ENCODE measurements at regions of chr16 and their contacts with region 1.

Region 1: GRCh38 chr16:52812678-52813556 is 239.8 kb downstream of the CHD9NB start:
- DNase-seq: peak; percentile 73
- ATAC-seq: peak; percentile 83
- H3K4me3 ChIP-seq: peak overlapping the region in 1 of 2 experiments; percentile 41; a peak in 2 of 4 replicates
- H3K27ac ChIP-seq: peak overlapping the region; percentile 50
- H3K4me1 ChIP-seq: peaks cover 17 to 29% of the 10 kb centered on the region in 2 experiments
- H3K27me3 ChIP-seq: no peaks in the 10 kb centered on the region
- CTCF ChIP-seq: no peak
- POLR2A ChIP-seq: no peak
- RAD21 ChIP-seq: no peak; the same call in 1 of the 2 replicates

Region 2: GRCh38 chr16:52757746-52758472 is 55.0 kb before region 1 on chr16:
- CTCF ChIA-PET with region 1: no interaction called
- POLR2A ChIA-PET with region 1: no interaction called
- RAD21 ChIA-PET with region 1: no interaction called
- intact Hi-C with region 1: loop called (anchors 10 kb)
- DNase-seq: no peak
- ATAC-seq: no peak
- H3K4me3 ChIP-seq: no peak overlapping the region
- H3K27ac ChIP-seq: no peak overlapping the region
- H3K4me1 ChIP-seq: no peaks in the 10 kb centered on the region
- H3K27me3 ChIP-seq: no peaks in the 10 kb centered on the region
- CTCF ChIP-seq: no peak
- POLR2A ChIP-seq: no peak
- RAD21 ChIP-seq: no peak

Region 3: DNA sequence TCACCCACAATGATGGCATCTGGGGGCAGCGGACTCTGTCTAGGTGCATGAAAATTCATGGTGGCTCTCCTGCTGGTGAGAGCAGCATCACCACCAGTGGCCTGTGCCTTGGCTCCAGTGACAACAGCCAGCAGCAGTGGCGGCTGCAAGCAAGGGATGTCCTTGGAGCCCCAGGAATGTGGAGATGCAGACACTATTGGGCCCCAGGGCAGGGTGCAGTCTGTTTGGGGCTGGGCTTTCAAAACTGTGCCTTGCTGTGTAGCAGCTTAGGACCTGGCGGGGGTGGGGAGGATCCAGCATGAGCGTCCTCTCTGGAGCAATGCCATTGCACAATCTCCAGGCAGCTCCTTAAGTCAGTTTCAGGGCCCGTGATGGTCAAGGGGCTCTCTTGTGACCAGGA is 40.1 kb after region 1 on chr16:
- CTCF ChIA-PET with region 1: no interaction called
- POLR2A ChIA-PET with region 1: no interaction called
- RAD21 ChIA-PET with region 1: no interaction called
- intact Hi-C with region 1: no loop called
- DNase-seq: no peak
- ATAC-seq: no peak
- H3K4me3 ChIP-seq: no peak overlapping the region
- H3K27ac ChIP-seq: no peak overlapping the region
- H3K4me1 ChIP-seq: no peaks in the 10 kb centered on the region
- H3K27me3 ChIP-seq: no peaks in the 10 kb centered on the region
- CTCF ChIP-seq: no peak
- POLR2A ChIP-seq: no peak
- RAD21 ChIP-seq: no peak

Measured in HCT116 (cell line).